Natural killer cell (primary cell): ENCODE measurements at regions of chr7 and their contacts with region 1.

Region 1: DNA sequence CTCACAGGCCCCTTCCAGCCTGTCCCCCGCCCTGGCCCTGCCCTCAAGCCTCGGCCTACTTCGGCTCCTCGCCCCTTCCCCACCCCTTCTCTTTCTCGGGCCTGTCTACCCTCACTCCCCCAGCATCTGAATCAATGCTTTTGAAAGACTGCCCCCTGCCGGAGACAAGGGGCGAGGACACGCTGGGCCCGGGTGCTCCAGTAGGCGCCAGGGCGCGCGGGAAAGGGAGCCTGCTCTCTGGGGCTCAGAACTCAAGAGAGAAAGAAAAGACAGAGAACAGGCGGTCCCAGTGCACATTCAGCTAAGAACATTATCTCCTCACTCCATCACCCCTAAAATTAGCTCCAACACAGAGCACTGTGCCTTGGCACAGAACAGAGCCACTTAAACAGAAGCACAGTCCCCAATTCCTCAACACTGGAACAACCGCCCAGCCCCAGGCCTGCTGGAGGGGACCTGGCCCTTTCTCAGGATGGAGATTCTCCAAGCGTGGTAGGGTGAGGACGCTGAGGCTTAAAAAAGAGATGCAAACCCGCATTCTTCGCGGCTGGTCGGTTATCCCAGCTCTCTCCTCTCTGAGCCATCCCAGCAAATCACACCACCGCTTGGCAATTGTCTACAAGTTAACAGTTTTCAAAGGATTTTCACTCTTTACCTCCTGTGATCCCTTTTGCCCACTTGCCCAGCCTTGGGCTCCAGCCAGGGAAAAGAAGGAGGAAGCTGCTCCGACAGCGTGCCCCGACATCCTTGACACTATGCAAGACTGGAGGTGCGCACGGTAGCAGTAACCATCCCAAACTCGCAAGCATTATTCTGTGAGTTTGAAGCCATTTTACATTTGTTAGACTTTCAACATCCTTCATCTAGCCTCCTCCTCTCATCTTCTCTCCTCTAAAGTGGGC is 2.1 kb downstream of the GIGYF1 start:
- DNase-seq: peak; percentile 73 to 90
- ATAC-seq: peak; percentile 64 to 75 (median 65)
- H3K4me3 ChIP-seq: no peak overlapping the region
- H3K4me3 Mint-ChIP-seq: peak overlapping the region; percentile 96
- H3K27ac ChIP-seq: no peak overlapping the region
- H3K27ac Mint-ChIP-seq: peak overlapping the region; percentile 84 to 94
- H3K4me1 ChIP-seq: peaks cover 46% of the 10 kb centered on the region
- H3K4me1 Mint-ChIP-seq: peaks cover 25 to 32% of the 10 kb centered on the region in 2 donors
- H3K27me3 ChIP-seq: no peaks in the 10 kb centered on the region
- H3K27me3 Mint-ChIP-seq: no peaks in the 10 kb centered on the region
- CTCF ChIP-seq: peak; percentile 82

Region 2: GRCh38 chr7:100604028-100604975 is 87.6 kb before region 1 on chr7:
- intact Hi-C with region 1: loop called (anchors 5 kb)
- DNase-seq: peak; percentile 77 to 84
- ATAC-seq: peak; percentile 77 to 82 (median 78)
- H3K4me3 ChIP-seq: peak overlapping the region; percentile 59
- H3K4me3 Mint-ChIP-seq: peak overlapping the region; percentile 94
- H3K27ac ChIP-seq: peak overlapping the region; percentile 86
- H3K27ac Mint-ChIP-seq: peak overlapping the region; percentile 89 to 94
- H3K4me1 ChIP-seq: peaks cover 29% of the 10 kb centered on the region
- H3K4me1 Mint-ChIP-seq: peaks cover 16 to 23% of the 10 kb centered on the region in 2 donors
- H3K27me3 ChIP-seq: no peaks in the 10 kb centered on the region
- H3K27me3 Mint-ChIP-seq: no peaks in the 10 kb centered on the region
- CTCF ChIP-seq: peak; percentile 69

Region 3: GRCh38 chr7:100632951-100633717 is 58.8 kb before region 1 on chr7:
- intact Hi-C with region 1: loop called (anchors 5 kb)
- DNase-seq: peak; percentile 37 to 78
- ATAC-seq: peak; percentile 77 to 81 (median 79)
- H3K4me3 ChIP-seq: peak overlapping the region; percentile 88
- H3K4me3 Mint-ChIP-seq: peak overlapping the region; percentile 86
- H3K27ac ChIP-seq: peak overlapping the region; percentile 56
- H3K27ac Mint-ChIP-seq: peak overlapping the region in 1 of 2 donors; percentile 34
- H3K4me1 ChIP-seq: peaks cover 14% of the 10 kb centered on the region
- H3K4me1 Mint-ChIP-seq: peaks cover 11 to 32% of the 10 kb centered on the region in 2 donors
- H3K27me3 ChIP-seq: no peaks in the 10 kb centered on the region
- H3K27me3 Mint-ChIP-seq: peaks cover 0 to 4% of the 10 kb centered on the region in 2 donors
- CTCF ChIP-seq: peak; percentile 31